Dorsolateral prefrontal cortex (tissue), 120 donors: ENCODE measurements at regions of chr9 and their contacts with region 1.

Region 1: GRCh38 chr9:126301985-126302603 is 24.5 kb upstream of the MVB12B start:
- DNase-seq: peak; percentile 54 to 91 (median 74)
- H3K4me3 ChIP-seq: no peak overlapping the region
- H3K27ac ChIP-seq: peak overlapping the region in 54 of 59 donors; percentile 21 to 100 (median 88)
- H3K27me3 ChIP-seq: no peaks in the 10 kb centered on the region
- CTCF ChIP-seq: peak; percentile 26 to 93 (median 76)

Region 2: DNA sequence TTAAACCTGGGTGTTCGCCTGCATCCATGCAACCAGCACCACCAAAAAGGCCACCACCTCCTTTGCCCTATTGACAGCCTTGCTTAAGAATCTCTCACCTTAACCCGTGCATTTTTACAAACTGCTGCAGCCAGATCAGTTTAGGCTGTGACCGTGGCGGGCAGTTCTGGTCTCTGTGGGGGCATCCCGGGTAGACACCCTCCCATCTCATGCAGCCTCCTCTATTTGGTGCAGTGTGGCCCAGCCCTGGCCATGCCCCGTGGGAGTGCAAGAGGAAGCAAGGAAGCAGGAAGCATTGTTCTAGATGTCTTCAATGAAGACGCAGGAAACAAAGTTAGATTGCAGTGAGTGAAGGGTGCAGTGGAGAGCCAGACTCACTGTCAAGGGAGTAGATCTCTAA is 84.3 kb before region 1 on chr9:
- intact Hi-C with region 1: no loop called
- DNase-seq: no peak
- H3K4me3 ChIP-seq: no peak overlapping the region
- H3K27ac ChIP-seq: no peak overlapping the region
- H3K27me3 ChIP-seq: peaks cover 0 to 27% (median 14%) of the 10 kb centered on the region in 45 donors
- CTCF ChIP-seq: no peak

Region 3: GRCh38 chr9:126228781-126229444 is 73.2 kb before region 1 on chr9:
- intact Hi-C with region 1: loop called in 1 of 2 experiments (anchors 2 kb)
- DNase-seq: peak; percentile 66 to 86 (median 79)
- H3K4me3 ChIP-seq: no peak overlapping the region
- H3K27ac ChIP-seq: peak overlapping the region in 6 of 59 donors; percentile 12 to 62 (median 36)
- H3K27me3 ChIP-seq: peaks cover 0 to 2% (median 0%) of the 10 kb centered on the region in 45 donors
- CTCF ChIP-seq: peak; percentile 85 to 100 (median 96)

Region 4: GRCh38 chr9:126334721-126335621 is 32.9 kb after region 1 on chr9:
- intact Hi-C with region 1: loop called in 1 of 2 experiments (anchors 5 kb)
- DNase-seq: no peak
- H3K4me3 ChIP-seq: peak overlapping the region in 7 of 59 donors; percentile 3 to 30 (median 15)
- H3K27ac ChIP-seq: peak overlapping the region in 58 of 59 donors; percentile 24 to 99 (median 94)
- H3K27me3 ChIP-seq: no peaks in the 10 kb centered on the region
- CTCF ChIP-seq: no peak

Region 5: GRCh38 chr9:126366366-126367011 is 64.4 kb after region 1 on chr9:
- intact Hi-C with region 1: loop called in 1 of 2 experiments (anchors 5 kb)
- DNase-seq: peak; percentile 37 to 88 (median 74)
- H3K4me3 ChIP-seq: peak overlapping the region in 8 of 59 donors; percentile 16 to 33 (median 22)
- H3K27ac ChIP-seq: peak overlapping the region; percentile 61 to 99 (median 92)
- H3K27me3 ChIP-seq: no peaks in the 10 kb centered on the region
- CTCF ChIP-seq: no peak

Region 6: GRCh38 chr9:126375386-126375785 is 73.3 kb after region 1 on chr9:
- intact Hi-C with region 1: loop called (anchors 5 kb)
- DNase-seq: no peak
- H3K4me3 ChIP-seq: peak overlapping the region in 8 of 59 donors; percentile 2 to 45 (median 10)
- H3K27ac ChIP-seq: peak overlapping the region; percentile 43 to 99 (median 96)
- H3K27me3 ChIP-seq: no peaks in the 10 kb centered on the region
- CTCF ChIP-seq: peak in 10 of 56 donors; percentile 12 to 33 (median 29)

Region 7: DNA sequence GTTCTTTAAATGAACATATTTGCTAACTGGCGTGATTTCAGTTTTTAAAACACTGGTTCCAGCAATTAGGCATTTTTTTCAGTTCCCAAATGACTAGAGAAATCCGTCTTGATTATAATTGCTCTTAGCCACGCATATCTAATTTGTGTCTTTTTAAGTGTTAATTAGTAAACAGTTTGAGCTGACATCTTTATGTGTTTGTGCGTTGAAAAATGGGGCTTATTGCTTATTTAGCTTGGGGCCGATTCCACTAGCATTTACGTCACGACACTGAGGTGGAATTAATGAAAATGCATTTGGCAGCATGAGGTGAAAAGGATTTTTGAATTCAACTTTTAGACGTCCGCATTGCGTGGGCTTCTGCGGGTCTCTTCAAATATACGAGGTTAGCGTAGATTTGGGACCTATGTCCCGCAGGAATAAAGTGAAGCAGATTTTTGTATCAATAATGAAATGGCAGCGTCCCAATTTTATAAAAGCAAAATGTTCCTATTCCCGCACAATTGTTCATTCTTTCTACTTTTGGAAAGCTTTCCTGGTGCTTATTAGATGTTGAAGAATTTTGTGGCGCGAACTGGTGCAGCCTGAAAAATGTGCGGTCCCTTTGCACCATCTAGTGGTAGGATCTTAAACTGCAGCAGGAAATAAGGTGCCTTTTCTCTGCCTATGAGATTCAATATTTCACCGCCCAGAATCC is 188.9 kb after region 1 on chr9:
- intact Hi-C with region 1: loop called in 1 of 2 experiments (anchors 5 kb)
- DNase-seq: peak in 3 of 10 donors; percentile 69 to 72 (median 70)
- H3K4me3 ChIP-seq: peak overlapping the region in 47 of 59 donors; percentile 2 to 54 (median 31)
- H3K27ac ChIP-seq: peak overlapping the region in 58 of 59 donors; percentile 38 to 92 (median 82)
- H3K27me3 ChIP-seq: no peaks in the 10 kb centered on the region
- CTCF ChIP-seq: peak; percentile 89 to 99 (median 96)

Region 8: DNA sequence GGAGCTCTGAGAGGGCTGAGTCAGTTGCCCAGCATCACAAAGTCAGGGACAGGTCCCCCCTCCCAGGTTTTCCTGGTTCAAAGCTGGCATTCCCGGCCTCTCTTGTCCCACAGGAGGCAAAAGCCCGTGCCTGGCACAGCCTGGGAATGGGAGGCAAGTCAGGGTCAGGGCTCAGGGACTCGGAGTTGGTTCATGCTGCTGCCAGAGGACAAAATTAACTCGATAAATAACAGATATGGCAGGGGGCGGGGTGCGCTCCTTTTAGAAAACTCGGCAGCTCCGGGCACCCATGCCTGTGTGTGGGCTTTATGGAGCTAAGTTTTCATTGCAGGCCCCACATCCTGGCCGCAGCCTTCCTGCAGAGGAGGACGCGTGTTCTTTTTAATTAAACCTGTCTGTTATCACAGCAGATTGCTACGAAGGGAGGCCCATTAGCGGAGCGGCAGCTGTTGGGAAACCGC is 248.8 kb after region 1 on chr9:
- intact Hi-C with region 1: no loop called
- DNase-seq: peak in 1 of 10 donors; percentile 36
- H3K4me3 ChIP-seq: no peak overlapping the region
- H3K27ac ChIP-seq: no peak overlapping the region
- H3K27me3 ChIP-seq: peaks cover 0 to 5% (median 0%) of the 10 kb centered on the region in 45 donors
- CTCF ChIP-seq: no peak